Activated naive CD8-positive, alpha-beta T cell treated with anti-CD3 and anti-CD28 coated beads, Interleukin-2, amount 10 ng/mL, durations not matched to agents 7 days and 5 days (primary cell): ENCODE measurements at regions of chr1 and their contacts with region 1.

Region 1: DNA sequence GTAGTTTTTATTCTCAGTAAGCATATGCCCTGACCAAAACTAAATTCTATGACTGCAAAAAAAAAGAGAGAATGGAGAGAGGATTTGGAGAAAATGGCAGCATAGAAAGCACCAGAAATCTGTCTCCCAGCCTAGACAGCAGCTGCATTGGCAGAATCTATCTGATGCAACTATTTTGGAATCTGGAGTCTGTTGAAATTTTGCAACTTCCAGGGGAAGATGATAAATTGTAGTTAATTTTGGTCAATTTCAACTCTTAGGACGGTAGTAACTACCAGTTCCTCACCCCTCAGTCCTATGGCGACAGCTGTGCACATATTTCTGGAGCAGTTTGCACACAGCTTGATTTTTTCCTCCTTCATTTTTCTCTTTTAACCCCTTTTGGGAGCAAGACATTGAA is 10.9 kb downstream of the EXO5 start:
- DNase-seq: no peak
- ATAC-seq: no peak
- H3K4me3 Mint-ChIP-seq: no peak overlapping the region
- H3K27ac Mint-ChIP-seq: no peak overlapping the region
- H3K4me1 Mint-ChIP-seq: no peaks in the 10 kb centered on the region
- H3K27me3 Mint-ChIP-seq: no peaks in the 10 kb centered on the region

Region 2: GRCh38 chr1:40432644-40433390 is 86.7 kb before region 1 on chr1:
- POLR2A ChIA-PET with region 1: no interaction called
- DNase-seq: no peak
- ATAC-seq: no peak
- H3K4me3 Mint-ChIP-seq: no peak overlapping the region
- H3K27ac Mint-ChIP-seq: no peak overlapping the region
- H3K4me1 Mint-ChIP-seq: no peaks in the 10 kb centered on the region
- H3K27me3 Mint-ChIP-seq: no peaks in the 10 kb centered on the region

Region 3: DNA sequence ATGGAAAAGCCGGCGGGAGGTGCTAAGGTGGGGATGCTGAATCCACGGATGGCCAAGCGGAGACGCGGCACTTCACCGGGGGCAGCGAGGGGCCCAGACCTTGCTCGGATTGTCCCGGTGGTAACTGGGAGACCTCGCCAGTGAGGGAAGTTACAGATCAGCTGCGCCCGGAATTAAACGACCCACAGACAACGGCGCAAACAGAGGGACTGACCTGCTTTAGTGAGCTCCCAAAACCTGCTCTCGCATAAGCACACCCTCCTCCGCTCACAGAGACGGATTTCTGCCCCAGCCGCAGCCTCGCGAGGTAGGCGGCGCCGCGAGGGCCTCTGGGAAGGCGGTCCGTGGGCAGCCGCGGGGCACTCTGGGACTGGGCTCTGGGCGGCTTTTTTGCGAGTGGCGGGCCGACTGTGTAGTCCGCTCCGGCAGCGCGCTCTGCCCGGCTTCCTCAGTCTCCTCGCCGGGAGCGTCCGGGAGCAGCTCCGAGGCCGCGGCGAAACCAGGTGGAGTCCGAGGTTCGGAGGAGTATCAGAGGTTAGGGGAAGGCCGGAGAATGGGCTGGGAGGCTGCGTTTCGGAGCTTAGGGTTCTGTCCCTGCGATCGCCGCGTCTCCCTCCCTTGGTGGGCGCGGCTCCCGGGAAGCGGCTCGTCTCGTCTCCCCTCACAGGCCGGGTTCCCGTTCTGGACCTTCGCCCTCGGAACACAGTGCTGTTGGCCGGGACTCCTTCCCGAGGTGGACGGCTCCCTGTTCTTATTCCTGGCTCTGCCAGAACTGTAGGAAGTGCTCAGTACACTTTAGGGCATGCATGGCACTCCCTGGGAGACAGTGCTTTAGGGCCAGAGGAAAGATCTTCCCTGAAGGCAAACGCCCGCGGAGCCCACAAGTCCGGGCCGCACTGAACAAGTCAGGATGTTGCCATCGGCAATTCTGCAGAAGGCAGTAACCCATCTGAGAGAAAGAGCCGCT is 10.9 kb before region 1 on chr1 and contains the start of gene EXO5:
- POLR2A ChIA-PET with region 1: interaction called, 10 read pairs
- DNase-seq: peak; percentile 91
- ATAC-seq: peak; percentile 98
- H3K4me3 Mint-ChIP-seq: peak within 1 kb of the TSS; percentile 95
- H3K27ac Mint-ChIP-seq: peak within 1 kb of the TSS; percentile 86
- H3K4me1 Mint-ChIP-seq: peaks cover 10% of the 10 kb centered on the region
- H3K27me3 Mint-ChIP-seq: no peaks in the 10 kb centered on the region
- total RNA-seq, gene EXO5: 14.6 to 19.4 TPM